ENCODE measurements at regions of chr3 and their contacts with region 1.

Region 1: DNA sequence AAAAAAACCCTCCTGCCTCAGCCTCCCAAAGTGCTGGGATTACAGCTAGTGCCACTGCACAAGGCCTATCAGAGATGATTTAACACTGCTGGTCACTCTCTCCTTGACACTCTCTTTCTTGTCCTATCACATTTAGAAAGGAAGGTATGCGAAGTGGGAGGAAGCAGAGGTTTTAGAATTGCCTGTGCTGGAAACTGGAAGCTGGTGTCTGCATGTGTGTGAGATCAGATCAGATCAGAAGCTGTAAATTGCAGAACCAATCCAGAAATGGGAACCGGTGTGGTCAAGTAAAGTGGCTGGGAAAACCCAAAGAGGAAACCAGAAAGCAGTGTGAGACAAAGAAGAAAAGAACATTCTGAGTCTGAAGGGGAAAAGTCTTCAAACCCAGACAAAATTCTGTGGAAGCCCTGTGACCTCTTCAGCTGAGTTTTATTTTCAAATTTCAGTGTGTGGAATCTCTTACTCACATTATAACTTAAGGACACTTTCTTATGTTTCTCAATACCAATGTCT is 2.8 kb downstream of the EFHB start:
- DNase-seq: peak; percentile 39
- H3K4me3 Mint-ChIP-seq: peak overlapping the region; percentile 50
- H3K27ac Mint-ChIP-seq: peak overlapping the region; percentile 95
- H3K4me1 Mint-ChIP-seq: peaks cover 38% of the 10 kb centered on the region
- H3K27me3 Mint-ChIP-seq: peaks cover 4% of the 10 kb centered on the region

Region 2: DNA sequence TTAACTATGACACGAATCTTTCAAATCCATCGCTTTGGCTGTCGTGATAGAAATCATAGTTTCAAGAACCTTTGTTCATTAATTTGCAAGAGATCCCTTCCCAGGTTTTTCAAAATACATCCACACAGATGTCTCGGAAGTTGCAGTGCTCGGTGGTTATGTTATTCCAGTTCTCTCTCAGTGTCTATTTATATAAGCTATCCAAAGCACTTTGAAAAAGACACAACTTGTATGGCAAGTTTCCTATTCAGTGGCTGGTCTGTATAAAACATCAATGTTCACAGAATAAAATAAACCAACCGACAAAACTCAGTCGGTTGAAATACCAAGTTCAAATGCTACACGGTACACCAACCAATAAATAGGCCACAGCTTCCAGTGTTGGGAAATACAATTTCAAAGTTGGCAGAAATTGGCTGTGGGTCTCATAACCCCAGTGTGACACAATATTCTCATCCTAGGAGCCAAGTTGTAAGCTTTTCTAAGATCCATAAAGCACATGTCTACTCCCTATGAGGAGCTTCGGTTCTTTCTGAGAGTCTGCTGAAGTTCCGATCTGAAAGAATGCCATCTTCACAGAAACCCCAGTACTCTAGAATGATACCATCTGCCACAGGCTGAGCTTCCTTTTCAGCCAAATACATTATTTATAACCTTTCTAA is 1529.8 kb before region 1 on chr3:
- intact Hi-C with region 1: loop called (anchors 10 kb)
- DNase-seq: no peak
- H3K4me3 Mint-ChIP-seq: peak overlapping the region; percentile 73
- H3K27ac Mint-ChIP-seq: peak overlapping the region; percentile 83
- H3K4me1 Mint-ChIP-seq: peaks cover 100% of the 10 kb centered on the region
- H3K27me3 Mint-ChIP-seq: no peaks in the 10 kb centered on the region

Region 3: GRCh38 chr3:19165654-19166053 is 765.6 kb before region 1 on chr3:
- intact Hi-C with region 1: no loop called
- DNase-seq: no peak
- H3K4me3 Mint-ChIP-seq: no peak overlapping the region
- H3K27ac Mint-ChIP-seq: no peak overlapping the region
- H3K4me1 Mint-ChIP-seq: no peaks in the 10 kb centered on the region
- H3K27me3 Mint-ChIP-seq: peaks cover 3% of the 10 kb centered on the region

Region 4: GRCh38 chr3:19946832-19947548 is 15.8 kb after region 1 on chr3 and contains the start of gene RAB5A:
- intact Hi-C with region 1: loop called (anchors 1 kb)
- DNase-seq: peak; percentile 96
- H3K4me3 Mint-ChIP-seq: peak within 1 kb of the TSS; percentile 92
- H3K27ac Mint-ChIP-seq: peak within 1 kb of the TSS; percentile 97
- H3K4me1 Mint-ChIP-seq: peaks cover 47% of the 10 kb centered on the region
- H3K27me3 Mint-ChIP-seq: no peaks in the 10 kb centered on the region
- total RNA-seq, gene RAB5A: 62.2 and 64.0 TPM in 2 replicates

Region 5: GRCh38 chr3:20054549-20054987 is 123.3 kb after region 1 on chr3:
- intact Hi-C with region 1: loop called (anchors 1 kb)
- DNase-seq: peak; percentile 54
- H3K4me3 Mint-ChIP-seq: no peak overlapping the region
- H3K27ac Mint-ChIP-seq: no peak overlapping the region
- H3K4me1 Mint-ChIP-seq: peaks cover 37% of the 10 kb centered on the region
- H3K27me3 Mint-ChIP-seq: no peaks in the 10 kb centered on the region

Region 6: GRCh38 chr3:20185701-20186598 is 254.7 kb after region 1 on chr3 and contains the start of gene SGO1:
- intact Hi-C with region 1: loop called (anchors 1 kb)
- DNase-seq: peak; percentile 100
- H3K4me3 Mint-ChIP-seq: no peak within 1 kb of the TSS
- H3K27ac Mint-ChIP-seq: no peak within 1 kb of the TSS
- H3K4me1 Mint-ChIP-seq: no peaks in the 10 kb centered on the region
- H3K27me3 Mint-ChIP-seq: no peaks in the 10 kb centered on the region
- total RNA-seq, gene SGO1: 17.8 and 18.3 TPM in 2 replicates